ENCODE measurements at regions of chr21 and their contacts with region 1.

Region 1: DNA sequence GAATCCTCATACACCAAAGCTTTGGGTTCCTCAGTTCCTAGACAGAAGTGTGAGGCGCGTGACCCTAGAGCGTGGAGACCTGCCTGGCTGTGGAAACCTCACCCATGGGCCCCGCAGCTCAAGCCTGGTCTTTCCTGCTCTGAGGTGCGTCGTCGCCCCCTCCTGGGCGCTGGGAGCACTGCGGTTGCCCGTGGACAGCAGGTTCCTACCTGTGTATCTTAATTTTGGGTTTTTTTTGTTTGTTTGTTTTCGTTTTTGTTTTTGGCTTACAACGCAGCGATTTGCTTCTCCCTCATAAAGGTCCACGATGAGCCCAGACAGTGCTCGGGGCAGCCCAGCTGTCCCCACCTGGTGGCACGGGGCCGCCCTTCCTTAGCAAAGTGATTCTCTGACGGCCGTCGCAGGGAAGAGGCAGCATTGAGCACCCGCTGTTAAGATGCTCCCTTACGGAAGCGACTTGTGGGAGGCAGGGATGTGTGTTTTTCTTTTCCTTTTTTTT is 36.6 kb upstream of the TRAPPC10 start:
- DNase-seq: peak; percentile 33
- ATAC-seq: peak; percentile 99
- H3K4me3 ChIP-seq: no peak overlapping the region
- H3K27ac ChIP-seq: no peak overlapping the region
- H3K4me1 ChIP-seq: peaks cover 6% of the 10 kb centered on the region
- H3K27me3 ChIP-seq: no peaks in the 10 kb centered on the region
- CTCF ChIP-seq: peak; percentile 82 to 98 (median 94)
- EP300 ChIP-seq: no peak
- POLR2A ChIP-seq: no peak
- RAD21 ChIP-seq: peak; percentile 95

Region 2: GRCh38 chr21:43805275-43805800 is 170.2 kb before region 1 on chr21:
- CTCF ChIA-PET with region 1: interaction called, 19 read pairs
- POLR2A ChIA-PET with region 1: interaction called, 4 read pairs
- RAD21 ChIA-PET with region 1: no interaction called
- SMC1A ChIA-PET with region 1: interaction called, 16 read pairs
- in situ Hi-C with region 1: loop called (anchors 5 kb)
- intact Hi-C with region 1: no loop called
- DNase-seq: peak; percentile 98
- ATAC-seq: peak; percentile 94
- H3K4me3 ChIP-seq: no peak overlapping the region
- H3K27ac ChIP-seq: peak overlapping the region; percentile 98
- H3K4me1 ChIP-seq: peaks cover 49% of the 10 kb centered on the region
- H3K27me3 ChIP-seq: no peaks in the 10 kb centered on the region
- CTCF ChIP-seq: no peak
- EP300 ChIP-seq: peak; percentile 88 to 94; a peak in 3 of 4 replicates
- POLR2A ChIP-seq: no peak
- RAD21 ChIP-seq: no peak

Region 3: GRCh38 chr21:43810505-43811261 is 164.9 kb before region 1 on chr21:
- CTCF ChIA-PET with region 1: interaction called, 19 read pairs
- POLR2A ChIA-PET with region 1: interaction called, 3 read pairs
- RAD21 ChIA-PET with region 1: interaction called, 3 read pairs
- SMC1A ChIA-PET with region 1: interaction called, 16 read pairs
- in situ Hi-C with region 1: loop called (anchors 5 kb)
- intact Hi-C with region 1: loop called (anchors 1 kb)
- DNase-seq: peak; percentile 51
- ATAC-seq: peak; percentile 91
- H3K4me3 ChIP-seq: no peak overlapping the region
- H3K27ac ChIP-seq: peak overlapping the region; percentile 50
- H3K4me1 ChIP-seq: peaks cover 44% of the 10 kb centered on the region
- H3K27me3 ChIP-seq: no peaks in the 10 kb centered on the region
- CTCF ChIP-seq: peak; percentile 98 to 99 (median 99)
- EP300 ChIP-seq: no peak
- POLR2A ChIP-seq: no peak
- RAD21 ChIP-seq: peak; percentile 99

Region 4: GRCh38 chr21:43913928-43914327 is 61.6 kb before region 1 on chr21:
- CTCF ChIA-PET with region 1: no interaction called
- POLR2A ChIA-PET with region 1: no interaction called
- RAD21 ChIA-PET with region 1: no interaction called
- SMC1A ChIA-PET with region 1: no interaction called
- in situ Hi-C with region 1: no loop called
- intact Hi-C with region 1: no loop called
- DNase-seq: no peak
- ATAC-seq: no peak
- H3K4me3 ChIP-seq: no peak overlapping the region
- H3K27ac ChIP-seq: no peak overlapping the region
- H3K4me1 ChIP-seq: peaks cover 5% of the 10 kb centered on the region; the same call in 1 of the 2 replicates
- H3K27me3 ChIP-seq: no peaks in the 10 kb centered on the region
- CTCF ChIP-seq: no peak
- EP300 ChIP-seq: no peak
- POLR2A ChIP-seq: no peak
- RAD21 ChIP-seq: no peak

Region 5: DNA sequence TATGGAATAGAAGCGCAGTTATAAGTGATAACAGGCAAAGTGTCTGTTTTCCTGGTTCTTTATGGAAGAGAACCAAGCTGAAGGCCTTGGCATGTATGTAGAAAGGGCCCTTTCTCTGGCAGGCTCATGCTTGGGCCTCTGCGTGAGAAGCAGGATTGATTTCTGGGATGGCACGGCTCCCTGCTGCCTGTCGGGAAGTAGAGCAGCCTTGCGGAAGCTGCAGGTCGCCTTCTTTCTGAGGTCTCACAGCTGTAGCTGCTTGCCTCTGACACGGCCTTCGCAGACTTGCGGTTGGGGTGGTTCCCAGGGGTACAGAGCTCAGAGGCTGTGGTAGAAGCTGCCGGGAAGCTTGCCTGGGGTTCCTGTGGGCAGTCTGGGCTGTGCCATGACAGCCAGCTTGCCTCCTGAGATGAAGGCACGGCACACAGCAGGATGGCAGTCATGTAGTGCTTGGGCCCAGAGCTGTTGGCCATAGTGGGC is 76.0 kb after region 1 on chr21:
- CTCF ChIA-PET with region 1: no interaction called
- POLR2A ChIA-PET with region 1: no interaction called
- RAD21 ChIA-PET with region 1: no interaction called
- SMC1A ChIA-PET with region 1: no interaction called
- in situ Hi-C with region 1: no loop called
- intact Hi-C with region 1: no loop called
- DNase-seq: no peak
- ATAC-seq: no peak
- H3K4me3 ChIP-seq: no peak overlapping the region
- H3K27ac ChIP-seq: no peak overlapping the region
- H3K4me1 ChIP-seq: no peaks in the 10 kb centered on the region
- H3K27me3 ChIP-seq: no peaks in the 10 kb centered on the region
- CTCF ChIP-seq: no peak
- EP300 ChIP-seq: no peak
- POLR2A ChIP-seq: no peak
- RAD21 ChIP-seq: no peak

Measured in GM12878 (cell line).